ENCODE measurements at regions of chr4 and their contacts with region 1.

Region 1: DNA sequence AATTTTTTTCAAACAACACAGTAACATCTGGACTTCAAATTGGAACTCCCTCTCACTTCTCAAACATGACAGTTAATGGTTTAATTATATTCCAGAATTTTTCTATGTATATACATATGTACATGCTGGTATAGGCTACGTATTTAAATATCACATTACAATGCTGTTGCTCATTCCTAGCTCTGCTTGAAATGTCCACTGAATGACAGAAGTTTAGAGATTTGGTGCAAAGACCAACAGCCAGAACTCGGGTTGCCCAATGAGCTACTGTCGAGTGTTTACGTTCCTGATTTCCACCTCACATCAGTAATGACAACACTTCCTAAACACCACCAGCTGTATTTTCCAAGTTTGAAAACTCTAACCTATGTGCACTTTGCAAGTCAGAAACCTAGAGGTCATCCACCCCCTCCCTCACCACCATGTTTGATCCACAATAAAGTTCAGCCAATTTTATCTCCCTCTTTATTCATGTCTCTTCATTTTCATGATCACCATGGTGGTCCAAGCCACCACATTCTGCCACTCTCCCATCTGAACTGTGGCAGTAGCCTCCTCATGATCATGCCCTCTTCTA is 49.3 kb upstream of the RPL34 start:
- DNase-seq: no peak
- H3K4me3 ChIP-seq: no peak overlapping the region
- H3K4me3 Mint-ChIP-seq: no peak overlapping the region
- H3K27ac ChIP-seq: no peak overlapping the region
- H3K27ac Mint-ChIP-seq: no peak overlapping the region
- H3K4me1 ChIP-seq: no peaks in the 10 kb centered on the region
- H3K4me1 Mint-ChIP-seq: peaks cover 1% of the 10 kb centered on the region
- H3K27me3 ChIP-seq: no peaks in the 10 kb centered on the region
- H3K27me3 Mint-ChIP-seq: peaks cover 0 to 8% (median 5%) of the 10 kb centered on the region in 3 donors
- CTCF ChIP-seq: no peak

Region 2: DNA sequence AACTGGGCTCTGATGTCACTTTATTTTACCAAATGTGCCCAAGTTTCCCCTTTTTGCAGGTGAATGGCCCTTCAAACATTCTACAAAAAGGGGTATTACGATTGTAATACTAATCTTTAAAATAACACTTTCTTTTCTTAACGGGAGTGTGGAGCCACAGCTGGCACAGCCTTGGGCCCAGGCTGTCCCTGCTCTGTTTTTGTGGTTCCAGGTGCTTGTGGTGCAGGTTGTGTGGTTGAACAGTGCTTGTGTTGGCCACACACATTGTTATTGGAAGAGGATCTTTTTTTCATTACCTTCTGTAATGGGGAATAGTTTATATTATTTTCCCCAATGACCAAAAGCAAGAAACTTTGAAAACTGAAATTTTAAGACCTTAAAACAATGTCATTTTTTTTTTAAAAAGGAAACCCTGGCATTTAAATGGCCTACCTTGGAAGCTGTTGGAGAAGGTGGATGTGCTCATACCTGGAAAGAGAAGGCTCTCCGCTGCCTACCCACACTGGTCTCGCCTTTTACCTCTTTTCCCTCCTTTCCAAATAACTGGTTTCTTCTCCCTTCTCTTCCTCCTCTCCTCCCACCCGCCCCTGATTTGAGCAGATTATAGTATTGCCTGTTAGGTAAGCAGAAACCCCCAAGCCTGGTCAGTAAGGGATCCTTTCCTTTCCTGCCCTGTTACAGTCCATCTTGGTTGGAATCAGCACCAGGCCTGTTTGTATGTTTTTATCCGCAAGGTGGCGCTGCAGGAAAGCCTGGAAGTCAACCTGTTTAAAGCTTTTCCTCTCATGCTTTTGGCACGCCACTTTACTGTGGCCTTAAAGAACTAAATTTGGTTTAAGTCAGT is 552.8 kb before region 1 on chr4:
- intact Hi-C with region 1: loop called (anchors 2 to 5 kb)
- DNase-seq: peak; percentile 38 to 62 (median 58)
- H3K4me3 ChIP-seq: no peak overlapping the region
- H3K4me3 Mint-ChIP-seq: no peak overlapping the region
- H3K27ac ChIP-seq: no peak overlapping the region
- H3K27ac Mint-ChIP-seq: peak overlapping the region in 1 of 7 donors; percentile 3
- H3K4me1 ChIP-seq: no peaks in the 10 kb centered on the region
- H3K4me1 Mint-ChIP-seq: no peaks in the 10 kb centered on the region
- H3K27me3 ChIP-seq: no peaks in the 10 kb centered on the region
- H3K27me3 Mint-ChIP-seq: peaks cover 0 to 2% (median 0%) of the 10 kb centered on the region in 3 donors
- CTCF ChIP-seq: peak; percentile 89

Region 3: DNA sequence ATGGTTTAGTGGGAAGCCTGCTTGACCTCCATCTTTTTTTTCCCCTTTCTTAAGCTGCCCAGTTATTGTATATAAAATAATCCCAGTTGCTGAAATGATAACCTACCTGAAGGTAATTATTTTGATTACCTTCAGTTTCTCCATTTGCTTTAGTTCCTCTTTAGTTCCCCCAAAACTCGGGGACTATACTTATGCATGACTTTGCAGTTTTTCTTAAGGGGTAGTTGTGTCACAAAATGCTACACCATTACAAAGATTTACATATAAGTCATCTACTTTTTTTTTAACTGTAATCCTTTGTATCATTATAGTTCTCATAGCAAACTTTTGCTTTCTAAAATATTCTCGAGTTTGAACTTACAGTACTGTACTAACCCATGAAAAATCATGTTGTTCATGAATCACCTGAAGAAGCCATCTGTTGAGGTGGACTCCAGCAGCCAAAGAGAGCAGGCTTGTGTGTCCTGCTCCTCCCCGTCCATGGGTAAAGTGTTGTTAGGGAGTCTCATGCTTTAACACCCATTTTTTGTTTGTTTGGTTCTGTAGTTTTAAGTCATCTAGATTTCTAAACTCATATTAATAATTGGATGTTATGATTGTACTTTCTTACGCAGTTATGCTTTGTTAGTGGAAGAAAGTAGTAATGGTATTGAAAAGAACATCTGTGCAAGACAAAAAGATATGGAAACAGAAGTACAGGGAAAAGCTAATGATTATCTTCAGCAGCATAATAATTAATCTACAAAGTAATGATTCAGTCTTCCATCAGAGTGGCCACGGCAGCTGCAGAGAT is 546.8 kb before region 1 on chr4:
- intact Hi-C with region 1: loop called (anchors 2 to 5 kb)
- DNase-seq: no peak
- H3K4me3 ChIP-seq: no peak overlapping the region
- H3K4me3 Mint-ChIP-seq: no peak overlapping the region
- H3K27ac ChIP-seq: peak overlapping the region in 1 of 2 donors; percentile 56
- H3K27ac Mint-ChIP-seq: peak overlapping the region in 2 of 7 donors; percentile 25 to 35
- H3K4me1 ChIP-seq: no peaks in the 10 kb centered on the region
- H3K4me1 Mint-ChIP-seq: peaks cover 5% of the 10 kb centered on the region
- H3K27me3 ChIP-seq: no peaks in the 10 kb centered on the region
- H3K27me3 Mint-ChIP-seq: peaks cover 0 to 2% (median 0%) of the 10 kb centered on the region in 3 donors
- CTCF ChIP-seq: no peak

Region 4: DNA sequence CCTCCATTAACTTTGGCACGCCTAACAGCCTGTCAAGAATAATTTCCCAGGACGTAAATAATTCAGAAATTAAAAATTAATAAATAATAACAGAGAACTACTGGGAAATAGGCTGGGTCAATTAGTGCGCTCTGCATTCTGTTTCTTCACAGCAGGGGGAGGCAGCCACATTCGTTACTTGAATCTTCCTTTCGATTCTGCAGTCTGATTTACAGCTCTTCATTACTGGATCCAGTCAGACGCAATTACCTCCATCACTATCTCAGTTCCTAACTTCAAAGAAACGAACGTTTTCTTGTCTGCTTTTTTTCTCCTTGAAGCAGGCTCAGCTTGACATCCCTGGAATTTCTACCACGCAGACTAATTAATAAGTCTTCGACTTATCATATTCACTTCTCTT is 40.3 kb after region 1 on chr4:
- intact Hi-C with region 1: no loop called
- DNase-seq: no peak
- H3K4me3 ChIP-seq: no peak overlapping the region
- H3K4me3 Mint-ChIP-seq: no peak overlapping the region
- H3K27ac ChIP-seq: no peak overlapping the region
- H3K27ac Mint-ChIP-seq: no peak overlapping the region
- H3K4me1 ChIP-seq: no peaks in the 10 kb centered on the region
- H3K4me1 Mint-ChIP-seq: no peaks in the 10 kb centered on the region
- H3K27me3 ChIP-seq: no peaks in the 10 kb centered on the region
- H3K27me3 Mint-ChIP-seq: peaks cover 0 to 3% (median 0%) of the 10 kb centered on the region in 3 donors
- CTCF ChIP-seq: no peak

Measured in CD14-positive monocyte (primary cell).